WTC11 (cell line): ENCODE measurements at regions of chr16 and their contacts with region 1.

Region 1: DNA sequence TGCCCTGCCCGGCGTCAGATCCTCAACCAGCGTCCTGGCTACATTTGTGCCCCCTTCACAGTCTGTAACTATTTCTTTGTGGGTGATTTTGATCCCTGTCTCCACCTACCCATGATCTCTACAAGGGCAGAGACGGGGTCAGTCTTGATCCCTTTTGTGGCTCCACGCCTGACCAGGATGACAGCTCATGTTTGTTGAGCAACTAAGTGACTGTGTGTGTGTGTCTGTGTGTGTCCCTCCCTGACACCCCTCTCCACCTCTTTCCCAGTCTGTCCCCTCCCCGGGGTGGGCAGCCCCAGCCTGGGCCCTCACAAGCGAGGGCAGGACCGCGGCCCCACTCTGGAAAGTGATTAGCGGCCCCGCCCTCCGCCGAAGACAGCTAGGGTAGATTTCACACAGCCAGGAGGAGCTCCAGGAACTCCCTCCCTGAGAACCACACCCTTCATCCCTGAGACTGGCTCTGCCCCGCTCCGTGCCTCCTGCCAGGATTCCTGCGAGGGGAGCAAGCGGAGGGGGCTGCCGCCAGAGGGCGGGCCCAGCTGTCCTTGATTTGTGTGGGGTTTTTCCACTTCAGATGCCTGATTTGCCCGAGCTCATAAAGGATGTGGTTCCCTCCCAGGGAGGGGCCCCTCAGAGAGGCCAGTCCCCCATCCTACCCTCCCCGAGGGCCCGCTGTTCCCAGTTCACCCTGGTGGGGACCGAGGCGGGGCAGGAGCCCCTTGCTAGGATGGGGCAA is 5.3 kb upstream of the HS3ST6 start:
- DNase-seq: peak; percentile 66
- ATAC-seq: peak; percentile 71
- H3K4me3 Mint-ChIP-seq: peak overlapping the region; percentile 49
- H3K27ac Mint-ChIP-seq: no peak overlapping the region
- H3K4me1 Mint-ChIP-seq: peaks cover 30% of the 10 kb centered on the region
- H3K27me3 Mint-ChIP-seq: peaks cover 76% of the 10 kb centered on the region
- CTCF ChIP-seq: no peak

Region 2: DNA sequence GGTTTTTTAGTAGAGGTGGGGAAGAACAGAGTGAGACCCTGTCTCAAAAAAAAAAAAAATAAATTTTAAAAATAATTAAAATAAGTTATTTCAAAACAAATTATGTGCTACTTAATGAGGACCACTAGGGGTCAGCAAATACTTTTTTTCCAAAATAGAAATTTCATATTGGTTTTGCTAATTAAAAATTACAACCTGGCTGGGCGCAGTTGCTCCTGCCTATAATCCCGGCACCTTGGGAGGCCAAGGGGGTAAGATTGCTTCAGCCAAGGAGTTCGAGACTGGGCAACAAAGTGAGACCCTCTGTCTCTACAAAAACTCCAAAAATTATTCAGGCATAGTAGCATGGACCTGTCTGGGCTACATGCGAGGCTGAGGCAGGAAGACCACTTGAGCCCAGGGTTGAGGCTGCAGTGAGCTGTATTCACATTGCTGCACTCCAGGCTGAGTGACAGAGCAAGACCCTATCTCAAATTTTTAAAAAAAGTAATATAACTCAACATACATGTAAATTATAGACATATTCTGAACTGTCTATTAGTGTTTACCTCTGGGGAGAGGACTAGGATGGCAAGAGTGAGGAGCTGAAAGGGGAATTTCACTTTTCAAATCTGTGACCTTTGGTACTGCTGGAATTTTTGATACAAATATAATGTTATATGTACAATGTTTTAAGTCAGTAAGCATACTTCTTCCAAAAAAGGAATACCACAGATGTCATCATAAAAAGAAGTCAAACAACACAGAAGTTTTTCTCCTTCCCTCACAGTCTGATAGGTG is 59.6 kb before region 1 on chr16:
- CTCF ChIA-PET with region 1: interaction called, 11 read pairs
- POLR2A ChIA-PET with region 1: no interaction called
- DNase-seq: no peak
- ATAC-seq: no peak
- H3K4me3 Mint-ChIP-seq: no peak overlapping the region
- H3K27ac Mint-ChIP-seq: no peak overlapping the region
- H3K4me1 Mint-ChIP-seq: no peaks in the 10 kb centered on the region
- H3K27me3 Mint-ChIP-seq: peaks cover 37% of the 10 kb centered on the region
- CTCF ChIP-seq: peak; percentile 62

Region 3: GRCh38 chr16:1871974-1872635 is 51.4 kb before region 1 on chr16 and contains the start of gene MEIOB:
- CTCF ChIA-PET with region 1: interaction called, 10 read pairs
- POLR2A ChIA-PET with region 1: no interaction called
- DNase-seq: peak; percentile 88
- ATAC-seq: peak; percentile 99
- H3K4me3 Mint-ChIP-seq: peak within 1 kb of the TSS; percentile 85
- H3K27ac Mint-ChIP-seq: no peak within 1 kb of the TSS
- H3K4me1 Mint-ChIP-seq: no peaks in the 10 kb centered on the region; the same call in 1 of the 2 replicates
- H3K27me3 Mint-ChIP-seq: peaks cover 35% of the 10 kb centered on the region
- CTCF ChIP-seq: no peak
- total RNA-seq, gene MEIOB: 1.4 to 3.9 TPM (median 3.3 TPM) in 3 replicates

Region 4: DNA sequence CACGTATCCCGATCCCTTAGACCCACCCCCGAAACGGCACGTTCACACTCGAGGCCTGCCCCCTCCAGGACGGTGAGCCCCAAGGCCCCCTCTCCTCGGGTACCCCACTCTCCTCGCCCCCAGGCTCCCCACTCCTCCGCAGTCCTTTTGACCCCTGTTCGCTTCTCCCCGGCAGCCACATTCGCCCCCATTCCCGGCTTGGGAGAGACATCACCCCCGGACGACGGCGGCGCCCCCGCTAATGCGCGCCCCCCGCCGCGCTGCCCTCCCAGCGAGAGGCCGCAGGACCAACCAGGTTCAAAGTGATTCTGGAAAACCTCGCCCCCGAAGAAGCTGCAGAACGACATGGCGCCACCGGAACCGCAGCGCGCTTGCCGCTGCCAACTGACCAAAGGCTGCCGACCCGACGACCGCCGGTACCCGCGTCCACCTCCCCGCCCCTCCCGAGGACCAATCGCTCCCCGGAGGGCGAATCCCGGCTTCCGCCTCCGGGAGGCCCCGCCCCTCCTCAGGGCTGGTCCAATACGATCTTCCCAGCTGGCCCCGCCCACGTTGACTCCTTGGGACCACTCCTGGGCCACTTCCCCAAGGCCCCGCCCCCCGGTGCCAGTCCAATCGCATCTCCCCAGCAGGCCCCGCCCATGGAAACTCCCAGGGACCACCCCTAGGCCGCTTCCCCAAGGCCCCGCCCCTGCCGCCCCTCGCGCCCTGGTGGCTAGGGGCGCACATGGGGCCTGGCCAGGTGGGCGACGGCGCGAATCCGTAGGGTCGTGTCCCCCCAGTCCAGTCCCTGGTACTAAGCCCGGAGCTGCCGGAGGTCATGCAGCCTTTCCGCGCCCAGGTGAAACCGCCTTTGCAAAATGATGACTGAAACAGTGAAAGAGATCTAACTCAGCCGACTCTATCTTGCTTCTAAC is 19.6 kb after region 1 on chr16 and contains the start of gene MSRB1:
- CTCF ChIA-PET with region 1: interaction called, 16 read pairs
- POLR2A ChIA-PET with region 1: no interaction called
- DNase-seq: peak; percentile 100
- ATAC-seq: peak; percentile 97
- H3K4me3 Mint-ChIP-seq: peak within 1 kb of the TSS; percentile 87
- H3K27ac Mint-ChIP-seq: peak within 1 kb of the TSS; percentile 60
- H3K4me1 Mint-ChIP-seq: peaks cover 22% of the 10 kb centered on the region
- H3K27me3 Mint-ChIP-seq: peaks cover 16% of the 10 kb centered on the region
- CTCF ChIP-seq: no peak
- total RNA-seq, gene MSRB1: 26.4 to 29.8 TPM (median 28.3 TPM) in 3 replicates

Region 5: GRCh38 chr16:1950047-1950446 is 26.6 kb after region 1 on chr16:
- CTCF ChIA-PET with region 1: interaction called, 13 read pairs
- POLR2A ChIA-PET with region 1: no interaction called
- DNase-seq: no peak
- ATAC-seq: no peak
- H3K4me3 Mint-ChIP-seq: no peak overlapping the region
- H3K27ac Mint-ChIP-seq: no peak overlapping the region
- H3K4me1 Mint-ChIP-seq: peaks cover 4% of the 10 kb centered on the region
- H3K27me3 Mint-ChIP-seq: peaks cover 8% of the 10 kb centered on the region; the same call in 1 of the 2 replicates
- CTCF ChIP-seq: no peak

Region 6: GRCh38 chr16:2278272-2278608 is 354.8 kb after region 1 on chr16:
- CTCF ChIA-PET with region 1: no interaction called
- POLR2A ChIA-PET with region 1: no interaction called
- DNase-seq: peak; percentile 41
- ATAC-seq: peak; percentile 78
- H3K4me3 Mint-ChIP-seq: no peak overlapping the region
- H3K27ac Mint-ChIP-seq: no peak overlapping the region
- H3K4me1 Mint-ChIP-seq: peaks cover 2% of the 10 kb centered on the region; the same call in 1 of the 2 replicates
- H3K27me3 Mint-ChIP-seq: no peaks in the 10 kb centered on the region
- CTCF ChIP-seq: no peak